ENCODE measurements at regions of chr11 and their contacts with region 1.

Region 1: GRCh38 chr11:128522055-128522942 is 65.1 kb downstream of the ETS1 start:
- DNase-seq: peak; percentile 94 to 97
- H3K4me3 ChIP-seq: peak overlapping the region; percentile 85 to 90
- H3K27ac ChIP-seq: peak overlapping the region; percentile 96 to 98
- H3K4me1 ChIP-seq: peaks cover 0 to 64% (median 38%) of the 10 kb centered on the region in 4 donors
- H3K27me3 ChIP-seq: no peaks in the 10 kb centered on the region
- CTCF ChIP-seq: no peak

Region 2: GRCh38 chr11:128082574-128082973 is 439.7 kb before region 1 on chr11:
- intact Hi-C with region 1: no loop called
- DNase-seq: no peak
- H3K4me3 ChIP-seq: no peak overlapping the region
- H3K27ac ChIP-seq: no peak overlapping the region
- H3K4me1 ChIP-seq: no peaks in the 10 kb centered on the region
- H3K27me3 ChIP-seq: no peaks in the 10 kb centered on the region
- CTCF ChIP-seq: no peak

Region 3: DNA sequence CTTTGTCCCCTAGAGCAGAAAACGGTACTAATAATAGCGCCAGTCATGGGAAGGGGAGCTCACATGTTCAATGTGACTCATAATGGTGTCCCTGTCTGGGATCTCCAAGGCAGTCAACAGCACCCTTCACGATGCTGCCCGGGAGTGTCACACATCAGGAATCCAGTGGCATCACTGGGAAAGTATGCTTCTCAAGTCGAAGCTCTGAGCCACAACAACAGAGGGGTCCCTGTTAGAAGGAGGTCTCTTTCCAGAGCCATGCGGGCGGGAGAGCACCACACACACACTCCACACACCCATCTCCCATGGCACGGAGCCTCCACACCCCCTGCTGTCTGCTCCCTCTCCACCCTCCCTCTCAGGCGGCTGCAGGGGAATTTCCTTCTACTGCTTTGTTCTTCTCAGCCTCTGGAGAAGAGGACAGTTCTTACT is 54.7 kb before region 1 on chr11:
- intact Hi-C with region 1: loop called (anchors 5 kb)
- DNase-seq: peak; percentile 68 to 85
- H3K4me3 ChIP-seq: no peak overlapping the region
- H3K27ac ChIP-seq: peak overlapping the region; percentile 74 to 88
- H3K4me1 ChIP-seq: peaks cover 0 to 74% (median 52%) of the 10 kb centered on the region in 4 donors
- H3K27me3 ChIP-seq: no peaks in the 10 kb centered on the region
- CTCF ChIP-seq: no peak

Region 4: DNA sequence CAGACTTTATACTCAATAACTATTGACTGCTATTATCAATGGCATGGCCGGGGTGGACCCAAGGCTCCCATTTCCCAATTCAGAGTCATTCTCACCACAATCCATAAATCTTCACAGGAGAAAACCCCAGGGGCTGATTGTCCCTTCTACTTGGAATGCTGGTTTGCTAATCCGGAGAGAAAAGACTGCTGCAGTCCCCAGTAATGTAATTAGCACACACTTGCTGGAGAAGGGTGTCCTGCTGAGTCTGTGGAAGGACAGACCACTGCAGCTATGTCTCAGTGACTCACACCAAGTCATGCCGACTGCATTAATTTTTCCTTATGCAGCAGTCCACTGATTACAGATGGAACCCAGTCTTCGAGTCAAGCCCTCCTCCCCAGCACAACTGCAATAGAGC is 71.0 kb after region 1 on chr11:
- intact Hi-C with region 1: no loop called
- DNase-seq: no peak
- H3K4me3 ChIP-seq: no peak overlapping the region
- H3K27ac ChIP-seq: no peak overlapping the region
- H3K4me1 ChIP-seq: no peaks in the 10 kb centered on the region
- H3K27me3 ChIP-seq: peaks cover 0 to 4% of the 10 kb centered on the region in 2 donors
- CTCF ChIP-seq: no peak